Gastrocnemius medialis (tissue), 4 donors: ENCODE measurements at regions of chr1 and their contacts with region 1.

Region 1: DNA sequence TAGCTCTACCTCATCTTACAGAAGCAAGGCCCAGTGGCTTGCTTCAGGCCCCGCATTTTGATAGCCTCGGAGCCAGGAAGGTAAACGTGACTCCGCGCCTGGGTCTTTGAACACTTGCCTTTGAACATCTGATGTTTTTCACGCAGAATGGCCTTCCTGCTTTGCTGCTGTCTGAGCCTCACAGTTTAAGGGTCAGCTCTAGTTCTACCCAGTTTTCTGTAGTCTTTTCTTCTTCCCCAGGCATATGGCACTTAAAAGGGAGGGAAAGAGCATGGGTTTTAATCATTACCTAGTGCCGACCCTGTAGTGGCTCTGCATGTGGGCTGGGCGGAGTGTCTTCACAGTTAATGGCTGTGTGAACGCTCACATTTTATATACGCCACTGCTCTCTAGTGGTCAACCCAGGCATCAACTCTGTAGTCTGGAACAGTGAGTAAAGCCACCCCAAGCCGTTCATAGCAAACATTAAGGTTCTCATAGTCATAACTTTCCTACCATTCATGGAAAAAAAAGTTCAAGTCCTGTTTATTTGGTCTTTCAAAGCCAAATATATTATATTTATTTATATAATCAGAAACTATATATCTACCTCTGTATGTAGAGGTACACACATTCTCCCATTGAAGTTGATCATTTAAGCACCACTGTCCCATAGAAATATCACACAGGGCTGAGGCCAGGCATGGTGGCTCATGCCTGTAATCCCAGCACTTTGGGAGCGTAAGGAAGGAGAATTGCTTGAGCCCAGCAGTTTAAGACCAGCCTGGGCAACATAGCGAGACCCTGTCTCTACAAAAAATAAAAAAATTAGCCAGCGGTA is 78.1 kb downstream of the IER5 start:
- DNase-seq: peak; percentile 48 to 67
- ATAC-seq: peak; percentile 98 to 100
- H3K4me3 ChIP-seq: no peak overlapping the region
- H3K27ac ChIP-seq: peak overlapping the region; percentile 61 to 69 (median 64)
- H3K4me1 ChIP-seq: peaks cover 0 to 4% of the 10 kb centered on the region in 2 donors
- H3K27me3 ChIP-seq: no peaks in the 10 kb centered on the region
- CTCF ChIP-seq: peak; percentile 81 to 93 (median 87)
- POLR2A ChIP-seq: no peak

Region 2: GRCh38 chr1:180502360-180503273 is 664.0 kb before region 1 on chr1 and contains the start of gene ACBD6:
- in situ Hi-C with region 1: loop called in 2 of 4 experiments (anchors 25 kb)
- intact Hi-C with region 1: loop called (anchors 10 kb)
- DNase-seq: peak; percentile 56 to 70
- ATAC-seq: peak; percentile 93 to 95
- H3K4me3 ChIP-seq: peak within 1 kb of the TSS; percentile 89 to 97 (median 94)
- H3K27ac ChIP-seq: peak within 1 kb of the TSS; percentile 85 to 93 (median 90)
- H3K4me1 ChIP-seq: peaks cover 23 to 28% of the 10 kb centered on the region in 2 donors
- H3K27me3 ChIP-seq: no peaks in the 10 kb centered on the region
- CTCF ChIP-seq: peak in 3 of 5 experiments; percentile 7 to 33 (median 30)
- POLR2A ChIP-seq: peak; percentile 30 to 49
- total RNA-seq, gene ACBD6: 15.0 to 27.4 (median 19.1) TPM

Region 3: GRCh38 chr1:180631766-180632325 is 534.7 kb before region 1 on chr1 and contains the start of gene XPR1:
- in situ Hi-C with region 1: no loop called
- intact Hi-C with region 1: loop called (anchors 10 kb)
- DNase-seq: peak; percentile 98 to 99
- ATAC-seq: peak; percentile 97
- H3K4me3 ChIP-seq: peak within 1 kb of the TSS; percentile 75 to 100 (median 92)
- H3K27ac ChIP-seq: peak within 1 kb of the TSS; percentile 83 to 97 (median 90)
- H3K4me1 ChIP-seq: peaks cover 32 to 34% of the 10 kb centered on the region in 2 donors
- H3K27me3 ChIP-seq: no peaks in the 10 kb centered on the region
- CTCF ChIP-seq: peak in 4 of 5 experiments; percentile 17 to 58 (median 33)
- POLR2A ChIP-seq: peak; percentile 85 to 95
- total RNA-seq, gene XPR1: 14.5 to 24.9 (median 18.6) TPM

Region 4: GRCh38 chr1:180954005-180954800 is 212.4 kb before region 1 on chr1:
- in situ Hi-C with region 1: no loop called
- intact Hi-C with region 1: loop called (anchors 5 kb)
- DNase-seq: peak in 1 of 2 donors; percentile 41
- ATAC-seq: peak; percentile 39 to 41
- H3K4me3 ChIP-seq: peak overlapping the region; percentile 48 to 87 (median 62)
- H3K27ac ChIP-seq: peak overlapping the region; percentile 67 to 77 (median 72)
- H3K4me1 ChIP-seq: peaks cover 29 to 43% of the 10 kb centered on the region in 2 donors
- H3K27me3 ChIP-seq: no peaks in the 10 kb centered on the region
- CTCF ChIP-seq: peak in 2 of 5 experiments; percentile 0 to 18
- POLR2A ChIP-seq: no peak

Region 5: GRCh38 chr1:181142096-181142958 is 24.3 kb before region 1 on chr1:
- in situ Hi-C with region 1: no loop called
- intact Hi-C with region 1: loop called (anchors 2 kb)
- DNase-seq: peak; percentile 65 to 81
- ATAC-seq: peak; percentile 93 to 96
- H3K4me3 ChIP-seq: peak overlapping the region; percentile 37 to 47 (median 42)
- H3K27ac ChIP-seq: peak overlapping the region; percentile 27 to 64 (median 44)
- H3K4me1 ChIP-seq: peaks cover 4 to 18% of the 10 kb centered on the region in 2 donors
- H3K27me3 ChIP-seq: no peaks in the 10 kb centered on the region
- CTCF ChIP-seq: peak; percentile 96 to 99 (median 98)
- POLR2A ChIP-seq: no peak

Region 6: DNA sequence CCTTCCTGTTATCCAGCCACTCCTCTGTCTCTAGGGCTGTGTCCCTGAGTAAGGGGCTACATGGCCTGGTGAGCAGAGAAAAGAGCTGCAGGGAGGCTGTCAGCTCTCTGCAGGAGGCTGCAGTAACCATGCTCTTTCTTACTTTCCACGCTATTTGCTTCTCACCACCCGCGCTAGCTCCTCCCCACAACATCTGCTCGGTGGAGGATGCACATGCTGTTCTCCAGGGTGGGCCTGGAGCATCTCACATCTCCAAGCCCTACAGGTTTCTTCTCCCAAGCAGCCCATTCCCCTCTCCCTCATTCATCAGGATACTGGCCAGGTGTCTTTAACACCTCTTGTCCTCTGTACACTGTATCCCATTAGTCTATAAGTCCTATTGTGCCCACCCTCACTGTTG is 25.7 kb after region 1 on chr1:
- in situ Hi-C with region 1: no loop called
- intact Hi-C with region 1: no loop called
- DNase-seq: no peak
- ATAC-seq: no peak
- H3K4me3 ChIP-seq: no peak overlapping the region
- H3K27ac ChIP-seq: no peak overlapping the region
- H3K4me1 ChIP-seq: peaks cover 5 to 7% of the 10 kb centered on the region in 2 donors
- H3K27me3 ChIP-seq: no peaks in the 10 kb centered on the region
- CTCF ChIP-seq: no peak
- POLR2A ChIP-seq: no peak